Activated CD8-positive, alpha-beta memory T cell treated with anti-CD3 and anti-CD28 coated beads, Interleukin-2, amount 10 ng/mL, durations not matched to agents 7 days and 5 days (primary cell): ENCODE measurements at regions of chr7 and their contacts with region 1.

Region 1: GRCh38 chr7:143240291-143241168 is 18.7 kb downstream of the TAS2R40 start:
- DNase-seq: peak; percentile 86
- ATAC-seq: peak; percentile 76
- H3K4me3 Mint-ChIP-seq: no peak overlapping the region
- H3K27ac Mint-ChIP-seq: peak overlapping the region; percentile 62
- H3K4me1 Mint-ChIP-seq: peaks cover 51% of the 10 kb centered on the region
- H3K27me3 Mint-ChIP-seq: peaks cover 16% of the 10 kb centered on the region

Region 2: GRCh38 chr7:143042159-143042789 is 198.3 kb before region 1 on chr7:
- CTCF ChIA-PET with region 1: no interaction called
- DNase-seq: no peak
- ATAC-seq: no peak
- H3K4me3 Mint-ChIP-seq: no peak overlapping the region
- H3K27ac Mint-ChIP-seq: no peak overlapping the region
- H3K4me1 Mint-ChIP-seq: no peaks in the 10 kb centered on the region
- H3K27me3 Mint-ChIP-seq: peaks cover 20% of the 10 kb centered on the region

Region 3: DNA sequence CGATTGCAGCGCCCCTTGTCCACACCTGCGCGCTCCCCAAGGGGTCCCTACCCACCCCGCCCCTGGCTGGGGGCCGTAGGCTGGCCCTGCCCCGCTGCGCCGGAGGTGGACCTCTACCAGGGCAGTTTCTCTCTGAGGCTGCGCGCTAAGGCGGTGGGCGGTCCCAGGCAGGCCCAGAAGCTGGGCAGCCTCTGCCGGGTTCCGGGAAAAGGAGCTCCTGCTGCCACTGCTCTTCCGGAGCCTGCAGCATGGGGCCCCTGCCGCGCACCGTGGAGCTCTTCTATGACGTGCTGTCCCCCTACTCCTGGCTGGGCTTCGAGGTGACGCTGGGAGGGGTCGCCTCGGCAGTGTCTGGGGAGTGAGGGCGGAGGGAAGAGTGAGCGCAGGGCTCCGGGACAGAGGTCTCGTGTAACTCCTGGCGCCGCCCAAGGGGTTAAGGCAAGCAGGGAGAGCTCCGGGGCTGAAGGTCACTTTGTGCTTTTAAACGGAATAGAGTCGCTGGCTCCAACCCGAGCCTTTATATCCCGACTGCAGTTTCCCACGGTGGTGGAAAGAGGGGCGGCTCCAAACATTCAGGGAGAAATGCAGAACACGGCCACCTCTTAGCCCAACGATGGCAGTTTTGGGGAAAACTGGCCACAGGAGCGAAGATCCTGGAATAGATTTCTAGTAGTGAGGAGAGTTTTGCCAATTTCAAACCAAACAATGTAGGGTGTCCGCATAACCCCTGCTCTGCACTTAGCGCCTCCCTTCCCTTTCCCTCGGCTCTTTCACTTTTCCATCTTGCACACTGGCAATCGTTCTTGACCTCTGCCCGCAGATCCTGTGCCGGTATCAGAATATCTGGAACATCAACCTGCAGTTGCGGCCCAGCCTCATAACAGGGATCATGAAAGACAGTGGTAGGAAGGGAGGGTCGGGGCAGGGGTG is 23.0 kb after region 1 on chr7 and contains the start of gene GSTK1:
- CTCF ChIA-PET with region 1: interaction called, 89 read pairs
- DNase-seq: peak; percentile 88
- ATAC-seq: peak; percentile 98
- H3K4me3 Mint-ChIP-seq: peak within 1 kb of the TSS; percentile 99
- H3K27ac Mint-ChIP-seq: peak within 1 kb of the TSS; percentile 93
- H3K4me1 Mint-ChIP-seq: peaks cover 62% of the 10 kb centered on the region
- H3K27me3 Mint-ChIP-seq: no peaks in the 10 kb centered on the region
- total RNA-seq, gene GSTK1: 335 to 436 TPM

Region 4: GRCh38 chr7:143287935-143288826 is 47.7 kb after region 1 on chr7 and contains the start of gene CASP2:
- CTCF ChIA-PET with region 1: interaction called, 21 read pairs
- DNase-seq: peak; percentile 99
- ATAC-seq: peak; percentile 95
- H3K4me3 Mint-ChIP-seq: peak within 1 kb of the TSS; percentile 96
- H3K27ac Mint-ChIP-seq: peak within 1 kb of the TSS; percentile 93
- H3K4me1 Mint-ChIP-seq: peaks cover 54% of the 10 kb centered on the region
- H3K27me3 Mint-ChIP-seq: no peaks in the 10 kb centered on the region
- total RNA-seq, gene CASP2: 117 to 129 TPM

Region 5: GRCh38 chr7:143305423-143306070 is 65.0 kb after region 1 on chr7:
- CTCF ChIA-PET with region 1: interaction called, 88 read pairs
- DNase-seq: peak; percentile 77
- ATAC-seq: peak; percentile 70
- H3K4me3 Mint-ChIP-seq: no peak overlapping the region
- H3K27ac Mint-ChIP-seq: peak overlapping the region; percentile 61
- H3K4me1 Mint-ChIP-seq: peaks cover 53% of the 10 kb centered on the region
- H3K27me3 Mint-ChIP-seq: no peaks in the 10 kb centered on the region

Region 6: DNA sequence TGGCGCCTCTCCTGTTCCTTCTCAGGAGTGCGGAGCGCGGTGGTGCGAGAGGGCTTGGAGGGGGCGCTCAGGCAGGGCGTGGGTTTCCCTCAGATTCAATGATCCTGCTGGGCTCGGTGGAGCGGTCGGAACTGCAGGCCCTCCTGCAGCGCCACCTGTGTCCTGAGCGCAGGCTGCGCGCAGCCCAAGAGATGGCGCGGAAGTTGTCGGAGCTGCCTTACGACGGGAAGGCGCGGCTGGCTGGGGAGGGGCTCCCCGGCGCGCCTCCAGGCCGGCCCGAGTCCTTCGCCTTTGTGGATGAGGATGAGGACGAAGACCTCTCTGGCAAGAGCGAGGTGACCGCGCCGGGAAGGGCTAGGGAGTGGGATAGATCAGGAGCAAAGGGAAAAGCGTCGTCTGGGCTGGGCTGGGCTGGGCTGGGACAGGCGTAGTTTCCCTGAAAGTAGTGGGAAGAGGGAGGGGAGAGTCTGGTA is 104.9 kb after region 1 on chr7:
- CTCF ChIA-PET with region 1: interaction called, 27 read pairs
- DNase-seq: peak; percentile 79
- ATAC-seq: peak; percentile 100
- H3K4me3 Mint-ChIP-seq: peak overlapping the region; percentile 61
- H3K27ac Mint-ChIP-seq: peak overlapping the region; percentile 49
- H3K4me1 Mint-ChIP-seq: peaks cover 12% of the 10 kb centered on the region
- H3K27me3 Mint-ChIP-seq: peaks cover 34% of the 10 kb centered on the region

Region 7: GRCh38 chr7:143380255-143380645 is 139.7 kb after region 1 on chr7:
- CTCF ChIA-PET with region 1: interaction called, 10 read pairs
- DNase-seq: peak; percentile 93
- ATAC-seq: peak; percentile 52
- H3K4me3 Mint-ChIP-seq: peak overlapping the region; percentile 79
- H3K27ac Mint-ChIP-seq: peak overlapping the region; percentile 94
- H3K4me1 Mint-ChIP-seq: peaks cover 41% of the 10 kb centered on the region
- H3K27me3 Mint-ChIP-seq: no peaks in the 10 kb centered on the region

Region 8: DNA sequence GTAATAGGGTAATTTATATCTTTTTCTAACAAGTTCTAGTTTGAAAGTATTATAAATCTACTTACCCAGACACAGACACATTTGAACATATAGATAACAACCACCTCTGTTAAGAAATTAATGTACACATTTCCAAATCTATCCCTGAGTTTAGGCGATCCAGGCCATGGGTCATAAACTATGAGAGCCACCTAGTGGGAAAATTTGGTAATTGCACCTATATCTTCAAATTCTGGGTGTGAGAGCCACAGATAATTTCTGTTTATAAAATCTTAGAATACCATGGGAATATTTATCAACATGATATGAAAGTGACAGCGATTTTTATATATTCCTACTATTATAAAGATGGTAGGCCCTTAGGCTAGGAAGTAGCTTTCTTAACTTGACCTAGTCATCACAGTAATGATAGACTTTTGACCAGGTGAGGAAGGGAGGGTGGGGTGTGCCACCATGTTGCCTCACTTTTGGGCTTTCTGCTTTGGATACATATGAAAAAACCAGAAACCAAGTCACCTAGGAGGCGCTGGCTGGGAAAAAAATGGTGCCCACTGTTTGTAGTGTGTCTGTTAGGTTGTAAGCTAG is 176.1 kb after region 1 on chr7:
- CTCF ChIA-PET with region 1: interaction called, 51 read pairs
- DNase-seq: no peak
- ATAC-seq: peak; percentile 64
- H3K4me3 Mint-ChIP-seq: no peak overlapping the region
- H3K27ac Mint-ChIP-seq: no peak overlapping the region
- H3K4me1 Mint-ChIP-seq: peaks cover 2% of the 10 kb centered on the region
- H3K27me3 Mint-ChIP-seq: peaks cover 7% of the 10 kb centered on the region